Calu3 (cell line): ENCODE measurements at regions of chr22 and their contacts with region 1.

Region 1: GRCh38 chr22:30927806-30928205 is 40.8 kb downstream of the MORC2 start:
- DNase-seq: no peak
- H3K4me3 Mint-ChIP-seq: no peak overlapping the region
- H3K27ac Mint-ChIP-seq: no peak overlapping the region
- H3K4me1 Mint-ChIP-seq: no peaks in the 10 kb centered on the region
- H3K27me3 Mint-ChIP-seq: no peaks in the 10 kb centered on the region
- CTCF ChIP-seq: no peak

Region 2: DNA sequence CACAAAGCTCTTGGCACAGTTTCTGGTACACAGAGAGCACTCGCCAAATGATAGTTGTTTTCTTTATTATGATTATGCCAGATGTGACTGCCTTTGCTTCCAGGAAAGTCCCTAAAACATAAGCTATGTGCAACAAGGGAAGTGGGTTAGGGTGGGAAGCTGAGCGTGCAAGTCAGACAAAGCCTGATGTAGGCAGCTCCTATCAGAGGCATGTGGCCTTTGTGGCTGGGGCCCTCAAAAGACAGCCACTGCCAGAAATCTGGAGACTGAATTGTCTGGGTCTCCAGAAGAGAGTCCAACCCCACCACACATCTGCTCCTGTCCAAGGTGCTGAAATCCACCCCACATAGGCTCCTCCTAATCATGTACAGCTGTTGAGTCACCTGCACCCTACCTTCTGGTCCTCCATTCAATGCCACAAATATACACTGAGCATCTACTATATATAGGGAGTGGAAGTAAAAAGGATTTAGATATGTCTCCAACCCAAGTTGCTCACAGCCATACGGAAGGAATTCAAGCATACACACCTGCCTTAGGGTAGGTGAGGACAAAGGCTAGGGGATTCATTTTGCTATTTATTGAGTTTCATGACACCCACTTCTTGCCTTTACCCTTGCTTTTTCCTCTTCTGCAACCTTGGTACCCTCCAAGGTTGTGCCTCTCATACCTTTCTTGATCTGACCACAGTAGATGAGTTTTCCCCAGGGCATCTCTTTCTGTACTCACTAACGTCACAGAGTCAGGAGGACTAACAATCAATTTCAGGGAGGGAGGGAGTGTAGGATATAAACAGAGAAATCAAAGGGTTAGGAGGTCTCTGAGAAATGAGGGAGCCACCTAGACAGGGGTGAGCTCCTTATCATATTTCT is 468.4 kb before region 1 on chr22:
- CTCF ChIA-PET with region 1: interaction called, 10 read pairs
- intact Hi-C with region 1: no loop called
- DNase-seq: peak; percentile 11
- H3K4me3 Mint-ChIP-seq: no peak overlapping the region
- H3K27ac Mint-ChIP-seq: no peak overlapping the region
- H3K4me1 Mint-ChIP-seq: no peaks in the 10 kb centered on the region
- H3K27me3 Mint-ChIP-seq: peaks cover 59% of the 10 kb centered on the region
- CTCF ChIP-seq: no peak

Region 3: GRCh38 chr22:30763815-30764686 is 163.8 kb before region 1 on chr22:
- CTCF ChIA-PET with region 1: no interaction called
- intact Hi-C with region 1: no loop called
- DNase-seq: peak; percentile 74
- H3K4me3 Mint-ChIP-seq: no peak overlapping the region
- H3K27ac Mint-ChIP-seq: no peak overlapping the region
- H3K4me1 Mint-ChIP-seq: peaks cover 8% of the 10 kb centered on the region
- H3K27me3 Mint-ChIP-seq: no peaks in the 10 kb centered on the region
- CTCF ChIP-seq: peak; percentile 79

Region 4: DNA sequence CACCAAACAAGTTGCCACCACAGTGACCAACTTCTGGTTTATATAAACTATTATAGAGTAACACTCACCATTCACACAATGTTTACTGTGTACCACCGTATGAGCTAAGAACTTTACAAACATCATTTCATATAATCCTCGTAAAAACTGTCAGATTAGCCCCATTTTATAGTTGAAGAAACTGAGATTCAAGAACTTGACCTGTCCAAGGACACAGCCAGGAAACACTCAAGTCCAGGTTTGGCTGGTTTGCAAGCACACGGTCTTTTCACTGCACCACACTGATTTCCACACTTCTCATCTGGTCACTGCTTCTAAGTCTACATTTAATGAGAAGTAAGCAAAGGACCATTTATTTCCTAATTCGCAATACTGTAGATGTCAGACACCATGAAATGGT is 37.1 kb after region 1 on chr22:
- CTCF ChIA-PET with region 1: no interaction called
- intact Hi-C with region 1: no loop called
- DNase-seq: no peak
- H3K4me3 Mint-ChIP-seq: no peak overlapping the region
- H3K27ac Mint-ChIP-seq: no peak overlapping the region
- H3K4me1 Mint-ChIP-seq: peaks cover 7% of the 10 kb centered on the region
- H3K27me3 Mint-ChIP-seq: no peaks in the 10 kb centered on the region
- CTCF ChIP-seq: no peak